ENCODE measurements at regions of chr20 and their contacts with region 1.

Region 1: DNA sequence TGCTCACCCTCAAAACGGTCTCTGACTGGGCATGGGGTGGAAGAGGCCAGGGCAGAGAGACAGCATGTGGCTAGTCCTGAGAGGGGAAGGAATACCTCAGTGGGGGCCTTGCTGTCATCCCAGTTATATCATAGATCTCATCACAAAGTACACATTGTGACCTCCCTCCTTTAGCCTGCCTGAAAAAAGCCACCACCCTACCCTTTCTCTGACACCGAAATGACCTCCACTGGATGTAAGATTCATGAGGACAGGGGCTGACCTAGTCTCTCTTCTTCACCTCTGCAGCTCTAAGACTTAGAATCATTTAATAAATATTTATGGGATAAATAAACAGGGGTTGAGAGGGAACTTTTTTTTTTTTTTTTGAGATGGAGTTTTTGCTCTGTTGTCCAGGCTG is at the start of gene C20orf173:
- DNase-seq: no peak
- H3K4me3 Mint-ChIP-seq: no peak within 1 kb of the TSS
- H3K27ac Mint-ChIP-seq: no peak within 1 kb of the TSS
- H3K4me1 Mint-ChIP-seq: no peaks in the 10 kb centered on the region
- H3K27me3 Mint-ChIP-seq: no peaks in the 10 kb centered on the region
- CTCF ChIP-seq: no peak
- total RNA-seq, gene C20orf173: not detected in 2 replicates

Region 2: DNA sequence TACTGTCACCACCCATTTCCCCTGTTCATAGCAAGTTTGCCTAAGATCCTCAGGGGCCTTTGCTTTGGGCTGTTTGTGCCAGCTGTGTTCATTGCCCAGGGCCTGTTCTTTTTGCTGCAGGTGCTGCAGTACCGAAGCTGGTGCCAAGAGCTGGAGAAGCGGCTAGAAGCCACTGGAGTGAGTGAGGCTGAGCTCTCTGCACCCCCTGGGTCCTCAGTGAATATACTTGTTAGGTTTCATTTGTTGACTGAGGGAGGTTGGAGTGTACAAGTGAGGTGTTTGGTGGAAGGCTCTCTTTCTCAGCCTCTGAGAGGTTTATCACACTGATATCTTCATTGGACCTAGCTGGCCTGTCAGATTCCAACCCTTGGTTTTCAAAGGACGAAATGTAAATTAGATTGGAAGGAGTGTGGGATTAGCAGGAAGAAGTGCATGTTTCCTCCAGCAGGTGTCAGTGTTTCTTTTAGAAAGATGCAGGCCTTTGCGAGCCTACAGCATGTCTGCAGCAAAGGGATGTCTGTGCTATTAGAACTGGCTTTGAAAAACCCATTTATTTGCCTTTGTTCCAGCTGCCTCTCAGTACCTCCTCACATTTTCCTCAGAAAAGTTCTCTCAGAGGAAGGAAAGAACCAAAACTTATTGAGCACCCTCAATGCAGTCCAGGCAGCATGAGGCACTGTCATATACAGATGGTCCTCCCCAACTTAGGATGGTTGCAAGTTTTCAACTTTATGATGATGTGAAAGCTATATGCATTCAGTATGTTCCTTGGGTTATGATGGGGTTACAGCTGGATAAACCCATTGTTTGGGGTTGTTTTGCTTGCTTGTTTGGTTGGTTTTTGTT is 65.9 kb before region 1 on chr20:
- CTCF ChIA-PET with region 1: no interaction called
- POLR2A ChIA-PET with region 1: no interaction called
- intact Hi-C with region 1: no loop called
- DNase-seq: peak; percentile 66
- H3K4me3 Mint-ChIP-seq: no peak overlapping the region
- H3K27ac Mint-ChIP-seq: no peak overlapping the region
- H3K4me1 Mint-ChIP-seq: peaks cover 8% of the 10 kb centered on the region
- H3K27me3 Mint-ChIP-seq: no peaks in the 10 kb centered on the region
- CTCF ChIP-seq: peak; percentile 76

Region 3: GRCh38 chr20:35541783-35542588 is 12.4 kb after region 1 on chr20 and contains the start of gene ERGIC3:
- CTCF ChIA-PET with region 1: no interaction called
- POLR2A ChIA-PET with region 1: interaction called, 11 read pairs
- intact Hi-C with region 1: no loop called
- DNase-seq: peak; percentile 95
- H3K4me3 Mint-ChIP-seq: peak within 1 kb of the TSS; percentile 91
- H3K27ac Mint-ChIP-seq: peak within 1 kb of the TSS; percentile 91
- H3K4me1 Mint-ChIP-seq: peaks cover 7% of the 10 kb centered on the region
- H3K27me3 Mint-ChIP-seq: no peaks in the 10 kb centered on the region
- CTCF ChIP-seq: no peak
- total RNA-seq, gene ERGIC3: 222 and 260 TPM in 2 replicates

Region 4: GRCh38 chr20:35601008-35601973 is 71.7 kb after region 1 on chr20:
- CTCF ChIA-PET with region 1: no interaction called
- POLR2A ChIA-PET with region 1: no interaction called
- intact Hi-C with region 1: no loop called
- DNase-seq: peak; percentile 39
- H3K4me3 Mint-ChIP-seq: peak overlapping the region; percentile 52
- H3K27ac Mint-ChIP-seq: no peak overlapping the region
- H3K4me1 Mint-ChIP-seq: no peaks in the 10 kb centered on the region
- H3K27me3 Mint-ChIP-seq: peaks cover 19% of the 10 kb centered on the region
- CTCF ChIP-seq: no peak